Sciatic nerve (tissue), 2 donors: ENCODE measurements at regions of chr16 and their contacts with region 1.

Region 1: DNA sequence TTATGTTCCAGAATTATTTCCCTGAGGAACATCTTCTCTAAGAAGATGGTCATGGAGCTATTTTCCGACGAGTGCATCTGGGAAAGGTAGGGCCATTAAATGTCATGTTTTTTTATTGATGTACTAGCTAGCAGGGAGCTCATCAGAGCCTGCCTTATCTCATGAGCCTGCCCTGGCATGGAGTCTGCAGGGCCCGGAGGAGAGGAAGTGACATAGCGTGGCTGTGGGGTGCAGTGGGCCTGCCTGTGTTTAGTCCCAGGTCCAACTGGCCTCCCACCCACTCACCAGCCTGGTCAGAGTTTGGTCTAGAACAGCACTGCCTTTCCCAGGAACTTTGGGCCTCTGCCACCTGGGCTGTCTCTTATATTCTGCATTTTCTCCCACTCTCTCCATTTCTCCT is 389.8 kb downstream of the SNX29 start:
- DNase-seq: no peak
- ATAC-seq: no peak

Region 2: DNA sequence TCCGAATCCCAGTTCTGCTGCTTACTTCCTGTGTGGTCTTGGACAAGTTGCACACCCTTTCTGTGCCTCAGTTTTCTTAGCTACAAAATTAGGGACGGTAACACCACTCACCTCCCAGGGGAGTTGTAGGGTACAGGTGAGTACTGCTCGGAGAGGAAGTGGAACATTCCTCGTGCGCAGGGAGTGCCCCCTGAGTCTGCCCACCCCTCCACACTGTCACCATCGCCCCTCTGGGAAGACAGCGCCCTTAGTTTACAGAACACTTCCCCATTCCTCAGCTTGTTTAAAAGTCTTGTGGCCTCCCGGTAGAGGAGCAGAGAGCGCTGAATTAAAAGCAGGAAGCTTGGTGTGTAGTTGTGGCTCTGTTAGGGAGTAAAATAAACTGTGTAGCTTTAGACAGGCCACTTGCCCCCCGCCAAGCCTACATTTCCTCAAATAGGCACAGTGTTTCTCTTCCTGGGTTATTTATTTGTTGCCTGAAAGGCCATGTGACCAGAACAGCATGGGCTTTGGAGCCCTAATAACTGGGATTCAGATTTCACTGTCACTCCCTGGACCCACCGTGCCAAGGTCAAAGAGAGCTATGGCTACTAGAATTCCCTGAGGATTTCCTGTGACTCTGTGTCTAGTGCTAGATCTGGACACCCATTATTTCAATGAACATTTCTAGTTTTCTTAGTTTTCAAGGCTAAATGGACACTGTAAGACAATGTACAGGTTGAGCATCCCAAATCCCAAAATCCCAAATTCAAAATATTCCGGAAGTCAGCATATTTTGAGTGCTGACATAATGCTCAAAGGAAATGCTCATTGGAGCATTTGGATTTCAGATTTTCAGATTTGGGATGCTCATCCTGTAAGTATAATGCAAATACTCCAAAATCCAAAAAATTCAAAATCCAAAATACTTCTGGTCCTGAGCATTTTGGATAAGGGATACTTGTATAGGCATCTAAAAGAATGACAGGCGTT is 17.3 kb before region 1 on chr16:
- intact Hi-C with region 1: loop called (anchors 2 kb)
- DNase-seq: no peak
- ATAC-seq: no peak

Region 3: GRCh38 chr16:13307255-13307654 is 940.9 kb after region 1 on chr16:
- intact Hi-C with region 1: no loop called
- DNase-seq: no peak
- ATAC-seq: no peak